ENCODE measurements at regions of chr22 and their contacts with region 1.

Region 1: DNA sequence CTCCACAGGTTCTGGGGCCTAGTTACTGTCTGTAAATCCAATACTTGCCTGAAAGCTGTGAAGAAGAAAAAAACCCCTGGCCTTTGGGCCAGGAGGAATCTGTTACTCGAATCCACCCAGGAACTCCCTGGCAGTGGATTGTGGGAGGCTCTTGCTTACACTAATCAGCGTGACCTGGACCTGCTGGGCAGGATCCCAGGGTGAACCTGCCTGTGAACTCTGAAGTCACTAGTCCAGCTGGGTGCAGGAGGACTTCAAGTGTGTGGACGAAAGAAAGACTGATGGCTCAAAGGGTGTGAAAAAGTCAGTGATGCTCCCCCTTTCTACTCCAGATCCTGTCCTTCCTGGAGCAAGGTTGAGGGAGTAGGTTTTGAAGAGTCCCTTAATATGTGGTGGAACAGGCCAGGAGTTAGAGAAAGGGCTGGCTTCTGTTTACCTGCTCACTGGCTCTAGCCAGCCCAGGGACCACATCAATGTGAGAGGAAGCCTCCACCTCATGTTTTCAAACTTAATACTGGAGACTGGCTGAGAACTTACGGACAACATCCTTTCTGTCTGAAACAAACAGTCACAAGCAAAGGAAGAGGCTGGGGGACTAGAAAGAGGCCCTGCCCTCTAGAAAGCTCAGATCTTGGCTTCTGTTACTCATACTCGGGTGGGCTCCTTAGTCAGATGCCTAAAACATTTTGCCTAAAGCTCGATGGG is 13.5 kb downstream of the PIK3IP1 start:
- DNase-seq: peak in 9 of 10 donors; percentile 48 to 86 (median 72)
- ATAC-seq: peak; percentile 78 to 79
- H3K4me3 Mint-ChIP-seq: peak overlapping the region; percentile 40 to 100 (median 75)
- H3K27ac Mint-ChIP-seq: peak overlapping the region; percentile 93 to 100 (median 99)
- H3K4me1 Mint-ChIP-seq: peaks cover 45 to 96% (median 92%) of the 10 kb centered on the region in 4 donors
- H3K27me3 Mint-ChIP-seq: no peaks in the 10 kb centered on the region

Region 2: DNA sequence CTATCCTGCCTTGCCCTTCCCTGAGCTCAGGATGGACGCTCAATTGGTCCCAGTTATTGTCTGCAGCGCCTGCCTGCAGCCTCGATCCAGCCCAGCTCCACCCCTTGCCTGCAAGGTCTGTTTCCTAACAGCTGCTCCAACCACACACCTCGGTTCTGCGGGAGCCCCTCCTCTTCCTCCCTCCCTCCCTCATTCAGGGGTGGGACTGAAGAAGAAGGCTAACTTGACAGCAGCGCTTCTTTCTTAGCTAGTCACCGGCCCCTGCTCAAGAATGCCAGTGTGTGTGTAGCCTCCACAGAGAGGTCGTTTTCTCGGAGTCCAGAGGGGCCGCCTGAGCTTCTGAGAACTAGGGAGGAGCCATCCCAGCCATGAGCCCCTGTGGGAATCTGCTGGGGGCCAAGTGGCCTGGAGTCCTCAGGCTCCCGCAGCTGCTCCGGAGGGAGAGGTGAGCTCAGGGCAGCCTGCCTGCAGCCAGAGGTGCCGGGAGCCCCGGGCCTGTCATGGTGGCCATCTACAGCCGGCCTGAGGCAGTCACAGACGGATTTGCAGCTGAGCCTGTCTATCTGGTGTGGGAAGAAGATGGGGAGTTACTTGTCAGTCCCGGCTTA is 30.5 kb before region 1 on chr22:
- POLR2A ChIA-PET with region 1: interaction called, 34 read pairs
- DNase-seq: peak; percentile 50 to 84 (median 70)
- ATAC-seq: peak; percentile 100
- H3K4me3 Mint-ChIP-seq: peak overlapping the region; percentile 73 to 90 (median 84)
- H3K27ac Mint-ChIP-seq: peak overlapping the region; percentile 40 to 92 (median 85)
- H3K4me1 Mint-ChIP-seq: peaks cover 8 to 43% (median 21%) of the 10 kb centered on the region in 4 donors
- H3K27me3 Mint-ChIP-seq: no peaks in the 10 kb centered on the region

Region 3: GRCh38 chr22:31313366-31314147 is 34.8 kb after region 1 on chr22:
- POLR2A ChIA-PET with region 1: interaction called, 20 read pairs
- DNase-seq: peak; percentile 36 to 79 (median 64)
- ATAC-seq: peak; percentile 71 to 78
- H3K4me3 Mint-ChIP-seq: peak overlapping the region in 2 of 10 donors; percentile 1 to 3
- H3K27ac Mint-ChIP-seq: peak overlapping the region; percentile 15 to 92 (median 64)
- H3K4me1 Mint-ChIP-seq: peaks cover 7 to 29% (median 17%) of the 10 kb centered on the region in 4 donors
- H3K27me3 Mint-ChIP-seq: no peaks in the 10 kb centered on the region